Activated CD4-positive, alpha-beta memory T cell treated with anti-CD3 and anti-CD28 coated beads, Interleukin-2, amount 10 ng/mL, durations not matched to agents 7 days and 5 days (primary cell): ENCODE measurements at regions of chr2 and their contacts with region 1.

Region 1: DNA sequence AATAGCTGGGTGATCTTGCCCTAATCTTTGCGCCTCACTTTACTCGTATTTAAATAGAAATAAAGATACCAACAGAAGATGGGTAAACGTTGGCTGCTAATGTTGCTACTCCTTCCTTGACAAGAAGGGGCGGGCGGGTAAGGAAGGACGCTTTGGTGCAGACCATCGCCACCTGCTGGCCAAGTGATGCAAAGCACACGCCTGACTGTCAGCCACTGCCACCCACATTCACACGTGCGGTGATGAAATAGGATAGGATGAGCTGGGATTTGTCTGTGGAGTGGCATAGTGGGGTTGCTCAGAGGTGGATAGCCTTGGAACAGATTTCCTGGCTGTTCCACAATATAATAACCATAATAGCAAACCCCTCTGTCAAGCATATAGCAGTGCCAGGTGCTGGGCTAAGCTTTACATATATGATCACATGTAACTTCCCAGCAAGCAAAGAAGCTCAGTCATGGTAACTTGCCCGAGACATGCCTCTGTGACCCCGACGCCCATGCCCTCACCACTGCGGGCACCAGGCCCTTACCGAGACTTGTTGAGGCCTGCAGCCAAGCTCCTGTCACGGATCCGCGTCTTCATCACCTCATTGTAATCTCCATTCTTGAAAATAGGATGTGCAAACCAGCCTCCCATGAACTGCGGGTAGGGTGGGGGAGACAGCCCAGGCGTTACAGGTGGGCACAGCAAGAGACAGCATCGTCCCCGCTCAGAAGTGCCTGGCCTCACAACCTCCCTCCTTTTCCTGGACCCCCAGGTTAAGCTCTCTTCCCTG is 39.3 kb downstream of the LCT start:
- DNase-seq: peak; percentile 80
- H3K4me3 Mint-ChIP-seq: no peak overlapping the region
- H3K27ac Mint-ChIP-seq: no peak overlapping the region
- H3K4me1 Mint-ChIP-seq: peaks cover 12% of the 10 kb centered on the region
- H3K27me3 Mint-ChIP-seq: no peaks in the 10 kb centered on the region

Region 2: DNA sequence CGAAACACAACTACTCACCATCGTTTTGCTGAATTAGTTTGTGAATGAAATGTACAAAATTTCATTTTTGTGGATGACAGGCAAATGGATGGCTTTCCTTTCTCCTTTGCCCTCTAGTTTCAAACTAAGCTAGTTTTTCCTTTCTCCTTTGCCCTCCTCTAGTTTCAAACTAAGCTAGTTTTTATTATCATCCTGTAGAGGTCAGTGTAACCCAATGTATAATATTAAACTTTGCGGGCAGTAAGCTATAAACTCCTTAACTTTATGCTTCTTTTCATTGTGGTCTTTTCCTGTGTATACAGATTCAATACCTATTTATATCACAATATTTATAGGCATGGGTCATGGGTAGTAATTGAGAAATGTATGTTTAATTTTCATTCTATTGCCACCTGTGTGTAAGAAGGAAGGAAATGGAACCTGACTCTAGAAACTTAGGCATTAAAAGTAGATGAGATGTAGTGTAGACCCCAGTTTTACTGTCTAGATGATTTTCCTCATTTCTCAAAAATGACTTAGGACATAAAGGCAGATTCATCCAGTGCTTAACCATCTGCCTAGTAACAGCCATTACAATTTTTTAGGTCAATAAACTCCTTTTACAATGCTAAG is 808.6 kb before region 1 on chr2:
- CTCF ChIA-PET with region 1: interaction called, 11 read pairs
- POLR2A ChIA-PET with region 1: no interaction called
- DNase-seq: no peak
- H3K4me3 Mint-ChIP-seq: no peak overlapping the region
- H3K27ac Mint-ChIP-seq: no peak overlapping the region
- H3K4me1 Mint-ChIP-seq: no peaks in the 10 kb centered on the region
- H3K27me3 Mint-ChIP-seq: peaks cover 26% of the 10 kb centered on the region

Region 3: DNA sequence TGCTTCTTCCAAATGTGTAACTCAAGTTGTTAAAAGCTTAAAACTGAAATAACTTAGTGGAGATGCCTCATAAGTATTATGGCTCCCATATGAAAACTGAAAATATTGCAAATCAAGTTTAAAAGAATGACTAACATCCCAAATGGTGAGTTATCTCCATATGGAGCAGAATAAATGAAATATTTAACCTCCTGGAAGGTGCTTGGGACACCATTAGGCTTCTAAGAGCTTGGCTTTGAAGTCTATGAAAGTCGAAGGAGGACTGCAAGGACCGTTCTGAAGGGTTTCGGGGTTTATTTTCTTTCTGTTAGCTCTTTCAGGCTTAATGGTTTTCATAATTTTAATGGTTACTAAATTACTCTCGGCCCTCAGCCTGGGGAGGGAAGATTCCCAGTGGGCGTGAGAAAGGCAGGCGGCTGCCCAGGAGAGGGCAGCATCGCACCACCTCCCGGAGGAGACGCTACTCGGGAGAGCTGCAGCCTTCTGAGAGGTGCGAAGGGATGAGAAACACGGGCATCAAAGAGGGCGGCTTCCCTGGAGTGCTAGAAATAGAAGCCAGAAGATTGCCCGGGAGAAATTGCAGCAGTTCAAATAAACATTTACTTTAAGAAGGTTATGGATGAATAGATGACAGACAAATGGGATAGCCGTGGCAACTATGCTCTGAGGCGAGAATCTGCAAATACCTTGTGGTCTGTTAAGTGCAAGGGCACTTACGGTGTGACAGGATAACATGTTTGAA is 793.5 kb before region 1 on chr2:
- CTCF ChIA-PET with region 1: interaction called, 13 read pairs
- POLR2A ChIA-PET with region 1: no interaction called
- DNase-seq: peak; percentile 73
- H3K4me3 Mint-ChIP-seq: no peak overlapping the region
- H3K27ac Mint-ChIP-seq: no peak overlapping the region
- H3K4me1 Mint-ChIP-seq: peaks cover 3% of the 10 kb centered on the region
- H3K27me3 Mint-ChIP-seq: peaks cover 24% of the 10 kb centered on the region

Region 4: GRCh38 chr2:135785032-135785431 is 12.7 kb before region 1 on chr2:
- CTCF ChIA-PET with region 1: interaction called, 39 read pairs
- POLR2A ChIA-PET with region 1: interaction called, 3 read pairs
- DNase-seq: no peak
- H3K4me3 Mint-ChIP-seq: no peak overlapping the region
- H3K27ac Mint-ChIP-seq: no peak overlapping the region
- H3K4me1 Mint-ChIP-seq: no peaks in the 10 kb centered on the region
- H3K27me3 Mint-ChIP-seq: no peaks in the 10 kb centered on the region

Region 5: GRCh38 chr2:135820003-135820618 is 22.4 kb after region 1 on chr2:
- CTCF ChIA-PET with region 1: interaction called, 28 read pairs
- POLR2A ChIA-PET with region 1: interaction called, 4 read pairs
- DNase-seq: peak; percentile 87
- H3K4me3 Mint-ChIP-seq: peak overlapping the region; percentile 48
- H3K27ac Mint-ChIP-seq: peak overlapping the region; percentile 78
- H3K4me1 Mint-ChIP-seq: peaks cover 35% of the 10 kb centered on the region
- H3K27me3 Mint-ChIP-seq: peaks cover 2% of the 10 kb centered on the region

Region 6: DNA sequence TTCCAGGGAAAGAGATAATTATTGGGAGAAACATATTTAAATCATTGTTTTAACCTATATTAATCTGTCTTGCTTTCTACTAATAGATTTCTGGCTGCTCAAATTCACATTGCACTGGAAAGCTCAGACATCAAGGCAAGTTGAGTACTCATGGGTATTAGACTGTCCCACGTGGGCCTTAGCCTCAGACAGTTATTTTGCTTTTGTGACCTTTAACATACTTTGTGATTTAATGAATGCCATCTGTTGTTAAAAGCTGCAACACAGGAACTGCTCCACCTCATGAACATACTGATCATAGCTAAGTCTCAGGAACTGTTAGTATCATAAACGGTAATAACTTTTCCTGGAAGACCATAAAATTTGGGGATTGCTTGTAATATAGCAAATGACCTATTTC is 42.0 kb after region 1 on chr2:
- CTCF ChIA-PET with region 1: interaction called, 10 read pairs
- POLR2A ChIA-PET with region 1: no interaction called
- DNase-seq: no peak
- H3K4me3 Mint-ChIP-seq: no peak overlapping the region
- H3K27ac Mint-ChIP-seq: no peak overlapping the region
- H3K4me1 Mint-ChIP-seq: peaks cover 29% of the 10 kb centered on the region
- H3K27me3 Mint-ChIP-seq: no peaks in the 10 kb centered on the region

Region 7: GRCh38 chr2:136384531-136385303 is 587.0 kb after region 1 on chr2:
- CTCF ChIA-PET with region 1: interaction called, 12 read pairs
- POLR2A ChIA-PET with region 1: no interaction called
- DNase-seq: peak; percentile 64
- H3K4me3 Mint-ChIP-seq: peak overlapping the region; percentile 11
- H3K27ac Mint-ChIP-seq: peak overlapping the region; percentile 91
- H3K4me1 Mint-ChIP-seq: peaks cover 45% of the 10 kb centered on the region
- H3K27me3 Mint-ChIP-seq: no peaks in the 10 kb centered on the region